ENCODE measurements at regions of chr1 and their contacts with region 1.

Region 1: GRCh38 chr1:158095737-158096335 is 84.9 kb upstream of the CD1D start:
- DNase-seq: peak; percentile 56
- ATAC-seq: peak; percentile 76
- H3K4me3 Mint-ChIP-seq: no peak overlapping the region
- H3K27ac Mint-ChIP-seq: no peak overlapping the region
- H3K4me1 Mint-ChIP-seq: no peaks in the 10 kb centered on the region
- H3K27me3 Mint-ChIP-seq: no peaks in the 10 kb centered on the region

Region 2: DNA sequence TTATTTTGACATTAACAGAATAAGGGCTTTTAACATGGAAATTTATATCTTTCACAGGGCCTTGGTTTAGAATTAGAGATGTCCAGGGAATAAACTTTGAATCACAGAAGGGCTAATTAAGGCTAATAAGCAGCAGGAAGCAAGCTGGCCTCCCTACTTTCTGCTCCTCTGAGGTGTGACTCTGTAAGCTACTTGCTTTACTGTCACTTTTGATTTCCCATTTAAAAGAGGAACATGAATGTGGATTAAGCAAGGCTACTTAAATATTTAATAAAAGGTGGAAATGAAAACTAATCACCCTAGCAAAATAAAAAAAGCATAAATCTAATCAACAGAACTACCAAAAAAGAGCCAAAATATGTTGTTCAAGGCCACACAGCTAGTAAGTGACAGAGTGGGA is 225.3 kb before region 1 on chr1:
- CTCF ChIA-PET with region 1: no interaction called
- DNase-seq: no peak
- ATAC-seq: no peak
- H3K4me3 Mint-ChIP-seq: no peak overlapping the region
- H3K27ac Mint-ChIP-seq: no peak overlapping the region
- H3K4me1 Mint-ChIP-seq: no peaks in the 10 kb centered on the region
- H3K27me3 Mint-ChIP-seq: peaks cover 17% of the 10 kb centered on the region

Region 3: DNA sequence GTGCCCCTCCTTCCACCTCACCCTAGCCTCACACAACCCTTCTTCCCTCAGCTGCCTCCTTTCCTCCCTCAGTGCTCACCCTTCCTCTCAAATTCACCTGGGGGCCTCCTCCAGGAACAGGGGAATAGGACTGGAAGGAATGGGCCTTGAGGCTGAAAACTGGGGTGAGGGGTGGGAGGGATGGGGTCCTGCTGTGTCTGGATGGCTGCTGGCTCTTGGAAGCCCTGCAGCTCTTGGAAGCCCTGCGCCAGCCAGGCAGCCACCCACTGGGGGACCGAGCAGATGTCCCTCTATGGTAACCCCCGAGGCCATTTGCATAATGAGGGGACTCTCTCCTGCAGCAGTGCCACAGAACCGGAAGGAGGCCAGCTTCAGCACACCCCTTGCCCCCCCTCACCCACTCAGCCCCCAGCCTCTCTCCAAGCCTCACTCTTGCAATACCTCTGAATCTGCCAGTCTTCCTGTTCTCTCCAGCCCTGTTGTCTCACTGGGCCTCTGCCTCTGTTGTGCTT is 17.2 kb before region 1 on chr1:
- CTCF ChIA-PET with region 1: no interaction called
- DNase-seq: no peak
- ATAC-seq: no peak
- H3K4me3 Mint-ChIP-seq: no peak overlapping the region
- H3K27ac Mint-ChIP-seq: no peak overlapping the region
- H3K4me1 Mint-ChIP-seq: no peaks in the 10 kb centered on the region
- H3K27me3 Mint-ChIP-seq: peaks cover 5% of the 10 kb centered on the region

Region 4: DNA sequence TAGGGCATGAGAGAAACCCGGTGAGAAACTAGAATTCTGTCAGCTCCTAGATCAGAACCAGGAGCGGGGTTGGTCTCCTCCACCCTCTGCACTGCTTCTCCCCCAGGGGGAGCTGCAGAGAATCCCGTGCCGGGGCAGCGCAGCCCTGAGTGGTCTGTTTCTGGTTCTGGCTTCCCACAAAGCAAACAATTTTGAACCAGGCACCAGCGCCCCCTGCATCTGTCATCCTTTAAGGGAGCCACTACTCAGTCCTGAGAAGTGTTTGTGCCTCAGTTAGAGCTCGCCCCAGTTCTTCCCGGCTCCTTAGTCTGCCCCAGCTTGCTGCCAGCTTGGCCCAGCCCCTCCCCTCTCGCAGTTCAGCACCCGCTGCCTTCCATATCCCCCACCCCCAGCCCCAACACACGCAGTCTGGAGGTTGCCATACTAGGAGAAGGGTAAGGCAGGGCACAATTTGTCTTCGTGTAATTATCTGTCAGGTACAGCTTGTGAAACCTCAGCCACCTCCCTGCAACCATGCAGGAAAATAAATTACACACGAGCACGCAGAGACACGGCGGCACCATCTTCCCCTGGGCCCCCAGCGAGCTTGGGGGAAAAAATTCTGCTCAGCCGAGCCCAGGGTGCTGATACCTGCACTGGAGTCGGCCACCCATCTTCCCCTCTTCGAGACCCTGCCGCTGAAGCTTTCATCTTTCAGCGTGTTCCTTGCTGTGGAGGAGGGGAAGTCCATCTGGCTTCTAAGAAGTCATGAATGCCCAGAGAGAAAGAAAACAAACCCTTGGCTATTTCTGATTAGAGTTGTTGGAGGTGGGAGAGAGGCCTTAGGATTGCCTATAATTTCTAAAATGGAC is 22.2 kb after region 1 on chr1:
- CTCF ChIA-PET with region 1: interaction called, 58 read pairs
- DNase-seq: peak; percentile 45
- ATAC-seq: peak; percentile 75
- H3K4me3 Mint-ChIP-seq: no peak overlapping the region
- H3K27ac Mint-ChIP-seq: no peak overlapping the region
- H3K4me1 Mint-ChIP-seq: peaks cover 11% of the 10 kb centered on the region
- H3K27me3 Mint-ChIP-seq: peaks cover 63% of the 10 kb centered on the region

Region 5: GRCh38 chr1:158124999-158125398 is 29.2 kb after region 1 on chr1:
- CTCF ChIA-PET with region 1: interaction called, 58 read pairs
- DNase-seq: peak; percentile 82
- ATAC-seq: peak; percentile 90
- H3K4me3 Mint-ChIP-seq: no peak overlapping the region
- H3K27ac Mint-ChIP-seq: no peak overlapping the region
- H3K4me1 Mint-ChIP-seq: peaks cover 12% of the 10 kb centered on the region
- H3K27me3 Mint-ChIP-seq: peaks cover 62% of the 10 kb centered on the region

Measured in activated CD8-positive, alpha-beta memory T cell treated with anti-CD3 and anti-CD28 coated beads, Interleukin-2, amount 10 ng/mL, durations not matched to agents 7 days and 5 days (primary cell).